CD4-positive, alpha-beta memory T cell (primary cell): ENCODE measurements at regions of chr14 and their contacts with region 1.

Region 1: GRCh38 chr14:74612350-74613021 is 449 bp upstream of the LTBP2 start:
- DNase-seq: peak; percentile 72 to 89 (median 85)
- H3K4me3 ChIP-seq: peak overlapping the region; percentile 17 to 72
- H3K4me3 Mint-ChIP-seq: peak overlapping the region; percentile 67 to 81 (median 78)
- H3K27ac ChIP-seq: no peak overlapping the region
- H3K27ac Mint-ChIP-seq: peak overlapping the region in 1 of 7 donors; percentile 42
- H3K4me1 ChIP-seq: peaks cover 31% of the 10 kb centered on the region
- H3K4me1 Mint-ChIP-seq: peaks cover 24 to 47% (median 38%) of the 10 kb centered on the region in 4 donors
- H3K27me3 ChIP-seq: no peaks in the 10 kb centered on the region
- H3K27me3 Mint-ChIP-seq: peaks cover 4 to 5% of the 10 kb centered on the region in 2 donors

Region 2: DNA sequence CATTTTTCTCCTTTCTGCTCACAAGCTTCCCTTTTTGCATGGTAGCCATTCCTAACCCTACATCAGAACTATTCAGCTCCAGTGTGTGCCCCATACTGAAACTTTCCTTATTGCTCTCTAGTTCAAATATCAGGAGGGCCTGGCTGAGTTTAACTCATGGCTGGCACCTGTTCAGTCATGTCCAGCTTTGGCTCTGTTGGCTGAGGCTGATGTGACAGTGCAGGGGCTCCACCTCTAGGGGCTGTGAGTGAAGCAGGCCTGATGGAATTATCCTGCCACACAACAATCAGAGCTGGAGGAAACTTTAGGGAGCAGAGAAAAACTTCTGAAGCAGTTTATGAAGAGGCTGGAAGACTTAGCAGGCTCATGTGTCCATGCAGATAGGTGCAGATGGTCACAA is 653.9 kb before region 1 on chr14:
- CTCF ChIA-PET with region 1: no interaction called
- POLR2A ChIA-PET with region 1: no interaction called
- intact Hi-C with region 1: no loop called
- DNase-seq: no peak
- H3K4me3 ChIP-seq: no peak overlapping the region
- H3K4me3 Mint-ChIP-seq: no peak overlapping the region
- H3K27ac ChIP-seq: no peak overlapping the region
- H3K27ac Mint-ChIP-seq: peak overlapping the region in 2 of 7 donors; percentile 46 to 78
- H3K4me1 ChIP-seq: no peaks in the 10 kb centered on the region
- H3K4me1 Mint-ChIP-seq: peaks cover 0 to 3% (median 0%) of the 10 kb centered on the region in 4 donors
- H3K27me3 ChIP-seq: no peaks in the 10 kb centered on the region
- H3K27me3 Mint-ChIP-seq: no peaks in the 10 kb centered on the region

Region 3: DNA sequence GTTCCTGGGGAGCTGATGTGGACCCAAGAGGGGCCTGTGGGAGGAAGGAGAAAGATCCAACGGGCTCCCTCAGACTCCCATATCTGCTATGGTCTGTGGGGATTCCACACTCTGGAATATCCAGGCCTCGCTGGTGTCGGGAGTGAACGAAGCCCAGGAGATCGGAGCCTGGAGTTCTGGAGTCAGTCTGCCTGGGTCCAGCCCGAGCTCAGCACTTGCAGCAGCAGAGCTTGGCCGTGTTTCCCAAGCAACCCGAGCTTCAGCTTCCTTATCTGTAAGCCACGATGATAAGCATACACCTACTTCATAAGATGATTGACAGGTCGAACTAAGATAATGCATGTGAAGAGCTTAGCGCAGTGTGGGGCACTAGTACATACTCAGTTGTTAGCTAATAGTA is 10.5 kb before region 1 on chr14:
- CTCF ChIA-PET with region 1: interaction called, 12 read pairs
- POLR2A ChIA-PET with region 1: no interaction called
- intact Hi-C with region 1: no loop called
- DNase-seq: no peak
- H3K4me3 ChIP-seq: no peak overlapping the region
- H3K4me3 Mint-ChIP-seq: no peak overlapping the region
- H3K27ac ChIP-seq: no peak overlapping the region
- H3K27ac Mint-ChIP-seq: no peak overlapping the region
- H3K4me1 ChIP-seq: no peaks in the 10 kb centered on the region
- H3K4me1 Mint-ChIP-seq: no peaks in the 10 kb centered on the region
- H3K27me3 ChIP-seq: no peaks in the 10 kb centered on the region
- H3K27me3 Mint-ChIP-seq: no peaks in the 10 kb centered on the region

Region 4: DNA sequence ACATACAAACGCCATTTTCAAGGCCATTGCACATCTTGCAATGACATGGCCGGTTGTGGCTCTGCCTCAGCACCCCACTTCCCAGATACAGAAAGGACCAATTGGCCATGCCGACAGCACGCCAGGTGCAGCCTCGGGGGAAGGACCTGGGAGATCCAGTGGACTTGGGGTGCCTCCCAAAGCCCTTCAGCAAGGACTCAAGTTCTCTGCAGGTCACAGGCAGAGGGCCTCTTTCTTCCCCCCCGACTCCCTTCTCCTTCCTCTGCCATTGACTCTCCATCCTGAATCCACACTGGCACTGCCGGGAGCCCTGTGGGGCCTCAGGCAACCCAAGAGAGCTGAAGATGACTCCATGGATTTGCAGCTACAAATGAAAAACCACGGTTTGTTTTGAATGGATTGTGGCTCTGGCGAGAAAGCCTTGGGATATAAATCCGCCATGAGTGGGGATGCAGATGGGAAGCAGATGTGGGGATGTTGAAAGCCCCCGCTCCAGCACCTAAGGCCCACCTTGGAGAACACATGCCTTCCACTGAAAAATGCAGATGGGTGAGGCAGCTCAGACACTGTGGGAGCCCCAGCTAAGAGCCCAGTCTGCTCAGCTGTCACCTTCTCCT is 34.7 kb after region 1 on chr14:
- CTCF ChIA-PET with region 1: interaction called, 11 read pairs
- POLR2A ChIA-PET with region 1: no interaction called
- intact Hi-C with region 1: no loop called
- DNase-seq: no peak
- H3K4me3 ChIP-seq: no peak overlapping the region
- H3K4me3 Mint-ChIP-seq: no peak overlapping the region
- H3K27ac ChIP-seq: no peak overlapping the region
- H3K27ac Mint-ChIP-seq: no peak overlapping the region
- H3K4me1 ChIP-seq: no peaks in the 10 kb centered on the region
- H3K4me1 Mint-ChIP-seq: peaks cover 4 to 16% (median 10%) of the 10 kb centered on the region in 4 donors
- H3K27me3 ChIP-seq: no peaks in the 10 kb centered on the region
- H3K27me3 Mint-ChIP-seq: peaks cover 2 to 4% of the 10 kb centered on the region in 2 donors

Region 5: GRCh38 chr14:74712499-74713394 is 100.3 kb after region 1 on chr14 and contains the starts of genes AREL1 and FCF1:
- CTCF ChIA-PET with region 1: interaction called, 11 read pairs
- POLR2A ChIA-PET with region 1: no interaction called
- intact Hi-C with region 1: loop called (anchors 1 kb)
- DNase-seq: peak; percentile 83 to 90 (median 85)
- H3K4me3 ChIP-seq: peak within 1 kb of the TSS; percentile 80 to 83
- H3K4me3 Mint-ChIP-seq: peak within 1 kb of the TSS; percentile 90 to 100 (median 98)
- H3K27ac ChIP-seq: peak within 1 kb of the TSS; percentile 91
- H3K27ac Mint-ChIP-seq: peak within 1 kb of the TSS; percentile 91 to 100 (median 99)
- H3K4me1 ChIP-seq: peaks cover 40% of the 10 kb centered on the region
- H3K4me1 Mint-ChIP-seq: peaks cover 38 to 60% (median 47%) of the 10 kb centered on the region in 4 donors
- H3K27me3 ChIP-seq: no peaks in the 10 kb centered on the region
- H3K27me3 Mint-ChIP-seq: no peaks in the 10 kb centered on the region
- total RNA-seq, gene AREL1: 44.4 to 46.1 TPM
- total RNA-seq, gene FCF1: 57.5 to 57.9 TPM

Region 6: GRCh38 chr14:74804219-74804826 is 191.8 kb after region 1 on chr14:
- CTCF ChIA-PET with region 1: interaction called, 14 read pairs
- POLR2A ChIA-PET with region 1: no interaction called
- intact Hi-C with region 1: loop called (anchors 1 kb)
- DNase-seq: peak in 3 of 5 donors; percentile 23 to 41 (median 27)
- H3K4me3 ChIP-seq: no peak overlapping the region
- H3K4me3 Mint-ChIP-seq: no peak overlapping the region
- H3K27ac ChIP-seq: no peak overlapping the region
- H3K27ac Mint-ChIP-seq: peak overlapping the region in 2 of 7 donors; percentile 20 to 57
- H3K4me1 ChIP-seq: no peaks in the 10 kb centered on the region
- H3K4me1 Mint-ChIP-seq: peaks cover 0 to 10% (median 8%) of the 10 kb centered on the region in 4 donors
- H3K27me3 ChIP-seq: no peaks in the 10 kb centered on the region
- H3K27me3 Mint-ChIP-seq: no peaks in the 10 kb centered on the region

Region 7: DNA sequence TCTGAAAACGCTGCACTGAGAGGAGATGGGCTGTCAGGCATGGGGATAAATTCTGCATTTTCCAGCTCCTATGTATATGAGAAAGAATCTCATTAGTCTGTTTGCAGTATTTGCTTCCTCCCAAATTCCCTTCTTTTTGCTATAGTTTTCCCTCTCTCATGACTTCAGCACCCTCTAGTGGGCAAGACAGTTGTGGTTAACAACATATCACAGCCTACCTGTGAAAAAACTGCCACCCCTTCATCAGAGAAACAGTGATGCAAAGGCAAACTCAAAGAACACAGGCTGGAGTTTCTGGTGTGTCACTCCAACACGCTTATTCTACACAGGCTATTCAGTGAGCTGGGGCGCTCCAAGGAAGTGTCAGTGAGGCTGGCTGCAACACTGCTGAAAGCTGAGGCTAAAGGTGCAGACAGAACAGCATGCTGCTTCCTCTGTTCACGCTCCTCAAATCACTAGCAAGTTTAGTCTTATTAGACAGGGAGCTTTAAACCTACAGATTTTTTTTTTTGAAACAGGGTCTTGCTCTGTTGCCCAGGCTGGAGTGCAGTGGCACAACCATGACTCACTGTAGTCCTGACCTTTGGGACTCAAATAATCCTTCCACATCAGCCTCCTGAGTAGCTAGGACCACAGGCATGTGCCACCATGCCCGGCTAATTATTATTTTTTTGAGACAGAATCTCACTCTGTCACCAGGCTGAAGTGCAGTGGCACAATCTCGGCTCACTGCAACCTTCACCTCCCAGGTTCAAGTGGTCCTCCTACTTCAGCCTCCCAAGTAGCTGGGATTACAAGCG is 476.3 kb after region 1 on chr14:
- CTCF ChIA-PET with region 1: interaction called, 9 read pairs
- POLR2A ChIA-PET with region 1: no interaction called
- intact Hi-C with region 1: loop called (anchors 5 kb)
- DNase-seq: peak; percentile 37 to 48 (median 46)
- H3K4me3 ChIP-seq: no peak overlapping the region
- H3K4me3 Mint-ChIP-seq: no peak overlapping the region
- H3K27ac ChIP-seq: no peak overlapping the region
- H3K27ac Mint-ChIP-seq: peak overlapping the region in 1 of 7 donors; percentile 47
- H3K4me1 ChIP-seq: no peaks in the 10 kb centered on the region
- H3K4me1 Mint-ChIP-seq: no peaks in the 10 kb centered on the region
- H3K27me3 ChIP-seq: no peaks in the 10 kb centered on the region
- H3K27me3 Mint-ChIP-seq: no peaks in the 10 kb centered on the region